Natural killer cell (primary cell): ENCODE measurements at regions of chr5 and their contacts with region 1.

Region 1: DNA sequence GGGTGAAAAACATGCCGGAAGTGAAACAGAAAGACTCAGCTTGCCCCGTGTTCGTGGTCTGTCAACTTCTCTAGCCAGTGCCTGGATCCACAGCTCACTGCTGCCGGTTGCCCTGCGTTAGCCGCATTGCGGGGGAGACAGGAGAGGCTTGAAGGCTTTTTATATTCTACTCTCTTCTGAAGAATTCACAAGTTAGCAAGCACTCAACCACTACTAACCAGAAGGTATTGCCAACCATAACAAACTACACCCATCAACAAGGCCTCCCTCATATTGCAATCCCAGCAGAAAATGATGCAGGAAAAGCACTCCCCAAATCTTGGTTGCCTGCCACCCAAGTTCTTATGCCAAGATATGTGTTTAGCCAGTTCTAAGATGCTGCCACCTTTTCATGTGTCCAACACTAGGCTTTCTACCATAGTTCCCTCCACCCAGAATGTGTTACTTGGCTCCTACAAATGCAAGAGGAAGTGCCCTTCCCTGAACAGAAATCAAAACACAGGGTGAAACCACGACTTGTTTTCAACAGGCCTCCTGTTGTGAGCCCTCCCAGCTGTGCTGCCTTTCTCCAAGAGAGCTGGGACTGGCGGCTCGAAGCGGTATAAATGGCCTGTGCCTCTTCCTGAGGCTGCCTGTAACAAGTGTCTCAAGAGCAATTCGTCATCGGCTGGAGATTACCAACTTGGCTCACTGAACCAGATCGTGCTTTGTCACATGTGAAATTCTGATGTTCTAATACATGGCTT is 129.0 kb downstream of the SNX18 start:
- DNase-seq: peak; percentile 73 to 83
- ATAC-seq: peak; percentile 88 to 97 (median 96)
- H3K4me3 ChIP-seq: no peak overlapping the region
- H3K4me3 Mint-ChIP-seq: peak overlapping the region; percentile 84
- H3K27ac ChIP-seq: peak overlapping the region; percentile 86
- H3K27ac Mint-ChIP-seq: peak overlapping the region; percentile 86 to 89
- H3K4me1 ChIP-seq: peaks cover 56% of the 10 kb centered on the region
- H3K4me1 Mint-ChIP-seq: peaks cover 57 to 69% of the 10 kb centered on the region in 2 donors
- H3K27me3 ChIP-seq: no peaks in the 10 kb centered on the region
- H3K27me3 Mint-ChIP-seq: no peaks in the 10 kb centered on the region
- CTCF ChIP-seq: no peak

Region 2: GRCh38 chr5:54517174-54518092 is 129.1 kb before region 1 on chr5 and contains the start of gene SNX18:
- intact Hi-C with region 1: loop called (anchors 1 kb)
- DNase-seq: peak; percentile 89 to 96
- ATAC-seq: peak; percentile 85 to 97 (median 89)
- H3K4me3 ChIP-seq: peak within 1 kb of the TSS; percentile 52
- H3K4me3 Mint-ChIP-seq: peak within 1 kb of the TSS; percentile 97
- H3K27ac ChIP-seq: peak within 1 kb of the TSS; percentile 46
- H3K27ac Mint-ChIP-seq: peak within 1 kb of the TSS; percentile 37 to 90
- H3K4me1 ChIP-seq: peaks cover 29% of the 10 kb centered on the region
- H3K4me1 Mint-ChIP-seq: peaks cover 8 to 34% of the 10 kb centered on the region in 2 donors
- H3K27me3 ChIP-seq: no peaks in the 10 kb centered on the region
- H3K27me3 Mint-ChIP-seq: peaks cover 0 to 6% of the 10 kb centered on the region in 2 donors
- CTCF ChIP-seq: peak; percentile 94
- total RNA-seq, gene SNX18: 31.1 to 45.6 (median 40.8) TPM

Region 3: GRCh38 chr5:54673523-54674225 is 27.1 kb after region 1 on chr5:
- intact Hi-C with region 1: loop called (anchors 2 kb)
- DNase-seq: peak; percentile 54 to 62
- ATAC-seq: peak; percentile 85 to 95 (median 95)
- H3K4me3 ChIP-seq: no peak overlapping the region
- H3K4me3 Mint-ChIP-seq: peak overlapping the region; percentile 67
- H3K27ac ChIP-seq: peak overlapping the region; percentile 70
- H3K27ac Mint-ChIP-seq: peak overlapping the region; percentile 71 to 81
- H3K4me1 ChIP-seq: peaks cover 34% of the 10 kb centered on the region
- H3K4me1 Mint-ChIP-seq: peaks cover 74 to 79% of the 10 kb centered on the region in 2 donors
- H3K27me3 ChIP-seq: no peaks in the 10 kb centered on the region
- H3K27me3 Mint-ChIP-seq: no peaks in the 10 kb centered on the region
- CTCF ChIP-seq: no peak

Region 4: GRCh38 chr5:54844905-54845566 is 198.5 kb after region 1 on chr5:
- intact Hi-C with region 1: loop called (anchors 10 kb)
- DNase-seq: peak in 1 of 2 donors; percentile 74
- ATAC-seq: peak in 1 of 3 donors; percentile 67
- H3K4me3 ChIP-seq: no peak overlapping the region
- H3K4me3 Mint-ChIP-seq: peak overlapping the region; percentile 86
- H3K27ac ChIP-seq: no peak overlapping the region
- H3K27ac Mint-ChIP-seq: peak overlapping the region; percentile 63 to 77
- H3K4me1 ChIP-seq: no peaks in the 10 kb centered on the region
- H3K4me1 Mint-ChIP-seq: peaks cover 11 to 24% of the 10 kb centered on the region in 2 donors
- H3K27me3 ChIP-seq: no peaks in the 10 kb centered on the region
- H3K27me3 Mint-ChIP-seq: peaks cover 0 to 6% of the 10 kb centered on the region in 2 donors
- CTCF ChIP-seq: peak; percentile 78

Region 5: GRCh38 chr5:55102348-55102747 is 455.8 kb after region 1 on chr5 and contains the start of gene GZMA:
- intact Hi-C with region 1: loop called (anchors 5 kb)
- DNase-seq: peak; percentile 33 to 79
- ATAC-seq: peak; percentile 37 to 56 (median 54)
- H3K4me3 ChIP-seq: peak within 1 kb of the TSS; percentile 71
- H3K4me3 Mint-ChIP-seq: peak within 1 kb of the TSS; percentile 94
- H3K27ac ChIP-seq: peak within 1 kb of the TSS; percentile 87
- H3K27ac Mint-ChIP-seq: peak within 1 kb of the TSS; percentile 92 to 96
- H3K4me1 ChIP-seq: peaks cover 15% of the 10 kb centered on the region
- H3K4me1 Mint-ChIP-seq: peaks cover 79 to 85% of the 10 kb centered on the region in 2 donors
- H3K27me3 ChIP-seq: no peaks in the 10 kb centered on the region
- H3K27me3 Mint-ChIP-seq: no peaks in the 10 kb centered on the region
- CTCF ChIP-seq: no peak
- total RNA-seq, gene GZMA: 530 to 621 (median 590) TPM